Common myeloid progenitor, CD34-positive (primary cell): ENCODE measurements at regions of chr2 and their contacts with region 1.

Region 1: GRCh38 chr2:240851078-240851991 is 17.3 kb upstream of the AGXT start:
- DNase-seq: peak; percentile 75 to 86 (median 77)
- H3K4me3 ChIP-seq: no peak overlapping the region
- H3K27ac ChIP-seq: no peak overlapping the region
- H3K4me1 ChIP-seq: no peaks in the 10 kb centered on the region
- H3K27me3 ChIP-seq: no peaks in the 10 kb centered on the region

Region 2: DNA sequence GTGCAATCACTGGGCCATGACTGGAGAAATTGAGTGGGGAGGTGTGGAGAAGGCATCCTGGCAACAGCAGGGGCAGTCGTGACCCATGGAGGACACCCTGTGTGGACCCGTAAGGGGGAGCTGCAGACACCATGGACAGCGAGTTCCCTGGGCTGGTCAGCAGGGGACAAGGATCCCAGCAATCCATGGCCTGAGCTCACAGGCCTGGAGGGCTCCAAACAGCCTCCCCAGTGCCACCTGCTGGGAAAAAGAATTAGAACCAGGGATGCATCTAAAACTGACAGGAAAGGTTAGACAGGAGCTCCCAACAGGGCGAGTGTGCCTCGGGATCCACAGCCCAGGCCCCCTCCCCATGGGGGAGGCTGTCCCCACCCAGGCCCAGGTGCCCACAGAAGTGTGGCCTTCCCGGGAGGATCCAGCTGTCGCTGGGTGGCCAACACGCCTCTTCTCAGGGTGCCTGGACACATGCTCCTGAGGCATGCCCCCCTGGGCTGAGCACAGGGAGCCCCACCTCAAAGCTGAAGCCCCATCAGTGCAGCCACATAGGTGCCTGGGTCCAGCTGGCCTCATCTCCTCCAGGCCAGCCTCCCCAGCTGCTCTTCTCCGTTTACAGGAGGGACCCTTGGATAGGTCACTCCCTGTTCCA is 10.8 kb before region 1 on chr2:
- CTCF ChIA-PET with region 1: interaction called, 14 read pairs
- POLR2A ChIA-PET with region 1: no interaction called
- DNase-seq: peak in 1 of 3 donors; percentile 25
- H3K4me3 ChIP-seq: no peak overlapping the region
- H3K27ac ChIP-seq: no peak overlapping the region
- H3K4me1 ChIP-seq: no peaks in the 10 kb centered on the region
- H3K27me3 ChIP-seq: peaks cover 0 to 13% (median 2%) of the 10 kb centered on the region in 5 experiments

Region 3: GRCh38 chr2:240861554-240861953 is 10.2 kb after region 1 on chr2:
- CTCF ChIA-PET with region 1: interaction called, 20 read pairs
- POLR2A ChIA-PET with region 1: no interaction called
- DNase-seq: no peak
- H3K4me3 ChIP-seq: no peak overlapping the region
- H3K27ac ChIP-seq: no peak overlapping the region
- H3K4me1 ChIP-seq: no peaks in the 10 kb centered on the region
- H3K27me3 ChIP-seq: peaks cover 0 to 4% (median 0%) of the 10 kb centered on the region in 5 experiments

Region 4: GRCh38 chr2:241123816-241124536 is 272.6 kb after region 1 on chr2:
- CTCF ChIA-PET with region 1: no interaction called
- POLR2A ChIA-PET with region 1: no interaction called
- DNase-seq: peak in 1 of 3 donors; percentile 21
- H3K4me3 ChIP-seq: no peak overlapping the region
- H3K27ac ChIP-seq: no peak overlapping the region
- H3K4me1 ChIP-seq: no peaks in the 10 kb centered on the region
- H3K27me3 ChIP-seq: no peaks in the 10 kb centered on the region

Region 5: GRCh38 chr2:241659150-241659739 is 807.9 kb after region 1 on chr2:
- CTCF ChIA-PET with region 1: interaction called, 12 read pairs
- POLR2A ChIA-PET with region 1: no interaction called
- DNase-seq: peak; percentile 53 to 77 (median 71)
- H3K4me3 ChIP-seq: no peak overlapping the region
- H3K27ac ChIP-seq: no peak overlapping the region
- H3K4me1 ChIP-seq: no peaks in the 10 kb centered on the region
- H3K27me3 ChIP-seq: no peaks in the 10 kb centered on the region